Tibial artery (tissue), 4 donors: ENCODE measurements at regions of chr5 and their contacts with region 1.

Region 1: DNA sequence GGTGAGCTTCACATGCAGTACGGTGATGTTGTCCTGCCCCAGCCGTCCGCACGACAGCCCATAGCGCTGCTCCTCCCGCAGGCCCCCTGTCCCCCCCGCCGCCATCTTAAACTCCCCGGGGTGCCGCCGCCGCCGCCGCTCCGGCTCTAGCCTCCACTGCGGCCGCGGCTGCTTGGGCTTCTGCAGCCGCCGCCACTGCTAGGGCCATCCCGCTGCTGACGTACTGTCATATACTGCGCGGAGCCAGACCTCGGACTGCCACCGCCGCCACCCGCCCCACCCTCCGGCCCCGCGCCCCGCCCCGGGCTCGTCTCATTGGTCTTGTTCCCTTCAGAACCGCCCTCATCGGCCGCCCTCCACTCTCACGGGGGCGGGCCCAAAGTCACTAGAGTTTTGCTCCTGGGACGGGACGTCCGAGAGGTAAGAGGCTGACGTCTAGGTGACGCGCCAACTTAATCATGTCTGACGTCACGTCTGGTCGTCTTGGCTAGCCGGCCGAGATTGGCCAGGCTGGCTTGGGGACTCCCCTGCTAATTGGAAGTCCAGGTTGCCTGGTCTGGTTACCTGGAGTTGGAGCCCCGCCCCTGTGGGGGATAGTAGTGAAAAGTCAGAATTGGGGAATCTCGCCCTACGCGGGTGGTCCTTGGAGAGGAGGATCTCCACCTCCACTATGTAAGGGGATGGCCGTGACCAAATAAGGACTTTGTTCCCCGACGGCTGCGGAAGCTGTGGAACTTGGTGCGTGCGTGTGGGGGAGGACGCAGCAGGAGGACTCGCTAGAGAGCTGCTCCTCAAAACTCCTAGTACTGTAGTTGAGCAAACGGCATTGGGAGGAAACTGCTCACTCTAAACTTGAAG is at the start of gene ELL2:
- DNase-seq: peak; percentile 99 to 100
- H3K4me3 ChIP-seq: peak within 1 kb of the TSS; percentile 84 to 98
- H3K27ac ChIP-seq: peak within 1 kb of the TSS; percentile 97 to 99
- H3K4me1 ChIP-seq: peaks cover 0 to 22% (median 7%) of the 10 kb centered on the region in 4 donors
- H3K27me3 ChIP-seq: no peaks in the 10 kb centered on the region
- CTCF ChIP-seq: no peak

Region 2: GRCh38 chr5:95858661-95859326 is 103.1 kb before region 1 on chr5:
- intact Hi-C with region 1: loop called (anchors 2 kb)
- DNase-seq: peak; percentile 93 to 99
- H3K4me3 ChIP-seq: peak overlapping the region; percentile 15 to 25
- H3K27ac ChIP-seq: peak overlapping the region; percentile 89 to 97
- H3K4me1 ChIP-seq: peaks cover 0 to 79% (median 55%) of the 10 kb centered on the region in 4 donors
- H3K27me3 ChIP-seq: no peaks in the 10 kb centered on the region
- CTCF ChIP-seq: peak; percentile 99 to 100

Region 3: DNA sequence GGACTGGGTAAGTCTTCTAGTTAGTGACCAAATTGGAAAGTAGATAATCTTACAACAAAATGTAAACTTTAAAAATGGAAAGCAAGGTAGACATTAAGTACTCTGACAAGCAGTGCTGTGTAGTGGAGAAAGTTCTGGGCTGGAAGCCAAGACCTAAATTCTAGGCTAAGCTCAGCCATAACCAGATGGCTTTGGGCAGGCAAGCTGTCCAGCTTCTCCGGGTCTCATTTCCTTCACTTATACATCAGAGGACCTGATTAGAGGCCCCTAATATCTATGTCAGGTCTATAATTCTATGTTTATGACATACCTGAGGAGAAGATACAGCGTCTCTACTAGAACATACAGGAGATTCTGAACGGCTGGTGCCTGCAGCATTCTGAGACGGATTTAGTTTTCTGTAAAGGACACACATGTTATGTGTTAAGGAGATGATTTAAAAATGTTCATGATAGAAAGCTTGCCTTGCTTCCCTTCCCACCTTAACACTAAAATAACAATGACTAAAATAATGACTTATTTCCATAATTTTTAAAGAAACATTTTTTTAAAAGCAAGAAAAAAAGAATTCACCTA is 61.4 kb before region 1 on chr5:
- intact Hi-C with region 1: loop called (anchors 10 kb)
- DNase-seq: no peak
- H3K4me3 ChIP-seq: no peak overlapping the region
- H3K27ac ChIP-seq: peak overlapping the region; percentile 7 to 35
- H3K4me1 ChIP-seq: peaks cover 0 to 53% (median 5%) of the 10 kb centered on the region in 4 donors
- H3K27me3 ChIP-seq: no peaks in the 10 kb centered on the region
- CTCF ChIP-seq: no peak

Region 4: DNA sequence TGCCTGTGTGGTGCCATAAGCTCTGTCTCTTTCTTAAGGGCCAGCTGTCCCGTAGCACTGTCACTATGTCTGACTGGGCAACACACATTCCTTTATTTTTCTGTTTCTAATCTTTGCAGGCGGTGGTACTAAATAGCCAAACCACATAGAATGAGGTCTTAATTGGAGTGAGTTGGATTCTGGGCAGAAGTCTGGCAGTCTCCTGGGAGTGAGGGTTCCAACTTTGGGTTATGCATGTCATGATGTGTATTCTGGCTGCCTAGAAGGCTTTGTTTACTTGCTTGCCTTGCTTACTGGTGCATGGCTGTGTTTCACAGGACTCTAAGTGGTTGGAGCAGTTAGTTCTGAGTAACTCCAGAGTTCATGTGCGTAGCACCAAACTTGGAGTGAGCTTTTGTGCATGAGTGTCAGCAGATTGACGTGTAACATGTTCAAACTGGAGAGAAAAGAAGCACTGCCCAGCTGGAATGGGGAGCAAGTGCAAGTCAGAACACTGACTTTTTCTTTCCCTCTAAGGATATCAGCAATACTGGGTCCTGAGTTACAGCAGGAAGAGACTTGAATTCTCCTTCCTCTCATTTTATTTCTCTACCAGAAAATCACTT is 285.4 kb after region 1 on chr5:
- intact Hi-C with region 1: loop called (anchors 5 kb)
- DNase-seq: peak; percentile 66 to 89
- H3K4me3 ChIP-seq: peak overlapping the region; percentile 20 to 27
- H3K27ac ChIP-seq: peak overlapping the region; percentile 80 to 84
- H3K4me1 ChIP-seq: peaks cover 0 to 58% (median 10%) of the 10 kb centered on the region in 4 donors
- H3K27me3 ChIP-seq: no peaks in the 10 kb centered on the region
- CTCF ChIP-seq: no peak

Region 5: DNA sequence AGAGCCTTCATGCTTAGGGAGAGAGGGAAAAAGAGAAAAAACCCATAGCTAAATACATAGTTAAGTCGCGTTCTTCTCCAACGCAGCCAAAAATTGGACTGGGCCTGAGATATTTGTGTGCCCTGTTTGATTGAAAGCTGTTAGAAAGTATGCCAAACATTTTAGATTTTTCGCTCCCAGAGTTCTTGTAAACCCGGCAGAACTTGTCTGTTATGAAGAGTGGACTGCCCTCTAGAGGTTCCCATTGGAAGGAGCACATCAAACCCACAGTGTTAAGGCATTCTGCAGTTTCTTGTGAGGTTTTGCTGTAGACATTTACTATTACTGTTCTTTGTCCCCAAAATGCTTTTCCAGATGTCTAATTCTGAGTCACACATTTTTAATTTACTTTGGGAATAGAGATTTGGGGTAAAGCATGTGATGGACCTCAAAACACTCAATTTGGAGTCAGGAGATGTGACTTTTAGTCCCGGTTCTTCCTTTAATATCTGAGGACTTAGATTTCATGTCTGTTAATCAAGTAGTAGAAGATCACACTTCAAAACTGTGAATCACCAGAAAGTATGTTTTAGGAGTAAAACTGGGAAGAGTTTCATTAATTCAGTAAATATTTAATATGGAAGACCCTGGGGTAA is 374.6 kb after region 1 on chr5:
- intact Hi-C with region 1: loop called (anchors 2 kb)
- DNase-seq: peak; percentile 87 to 92
- H3K4me3 ChIP-seq: no peak overlapping the region
- H3K27ac ChIP-seq: peak overlapping the region; percentile 84 to 87
- H3K4me1 ChIP-seq: peaks cover 0 to 93% (median 70%) of the 10 kb centered on the region in 4 donors
- H3K27me3 ChIP-seq: no peaks in the 10 kb centered on the region
- CTCF ChIP-seq: peak; percentile 87

Region 6: GRCh38 chr5:96662725-96663513 is 701.1 kb after region 1 on chr5:
- intact Hi-C with region 1: loop called (anchors 10 kb)
- DNase-seq: peak; percentile 93 to 98
- H3K4me3 ChIP-seq: peak overlapping the region; percentile 98 to 100
- H3K27ac ChIP-seq: peak overlapping the region; percentile 100
- H3K4me1 ChIP-seq: peaks cover 0 to 38% (median 10%) of the 10 kb centered on the region in 4 donors
- H3K27me3 ChIP-seq: no peaks in the 10 kb centered on the region
- CTCF ChIP-seq: no peak